ENCODE measurements at regions of chr5 and their contacts with region 1.

Region 1: DNA sequence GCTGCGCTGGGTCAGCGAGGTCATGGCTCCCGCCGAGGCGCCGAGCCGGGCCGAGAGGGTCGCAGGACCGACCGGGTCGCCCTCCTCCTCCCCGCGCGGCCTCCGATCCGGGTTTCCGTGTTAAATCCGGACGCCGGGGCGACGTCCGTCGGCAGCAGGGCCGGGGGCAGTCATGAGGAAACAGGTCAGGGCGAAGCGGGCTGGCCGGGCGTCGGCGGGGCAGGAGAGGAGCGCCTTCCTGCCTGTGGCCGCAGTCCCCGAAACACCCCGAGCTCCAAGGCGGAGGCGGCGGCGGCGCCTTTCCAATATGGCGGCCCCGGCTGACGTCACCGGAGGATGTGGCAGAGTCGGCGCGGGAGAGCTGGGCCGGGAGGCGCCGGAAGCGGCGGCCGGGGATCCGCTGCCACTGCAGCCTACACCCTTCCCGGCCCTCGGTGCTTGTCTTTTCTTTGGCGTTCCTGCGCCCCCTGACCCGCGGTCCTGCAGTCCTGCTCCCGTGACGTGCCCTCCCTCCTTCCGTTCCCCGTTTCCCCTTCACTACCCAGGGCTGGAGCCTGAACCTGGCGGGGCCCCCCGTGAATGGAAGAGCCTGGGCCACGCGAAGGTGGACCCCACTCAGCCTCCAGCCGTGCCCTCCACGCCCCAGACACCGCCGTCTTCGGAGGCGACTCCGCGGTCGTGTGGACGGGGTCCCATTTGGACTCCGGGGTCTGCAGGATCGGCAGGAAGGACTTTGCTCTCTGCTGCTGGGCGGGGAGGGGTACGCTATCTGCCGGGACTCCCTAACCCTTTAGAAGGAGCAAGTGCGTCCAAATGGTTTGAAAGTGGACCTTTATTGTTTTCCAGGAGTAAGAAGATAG is at the start of gene GOLPH3:
- DNase-seq: peak; percentile 83
- ATAC-seq: peak; percentile 86
- H3K4me3 ChIP-seq: peak within 1 kb of the TSS; percentile 86
- H3K27ac ChIP-seq: peak within 1 kb of the TSS; percentile 99
- H3K4me1 ChIP-seq: peaks cover 4% of the 10 kb centered on the region; the same call in 1 of the 2 replicates
- H3K27me3 ChIP-seq: no peaks in the 10 kb centered on the region
- CTCF ChIP-seq: no peak; the same call in 1 of the 2 replicates
- POLR2A ChIP-seq: peak; percentile 88
- RAD21 ChIP-seq: no peak
- total RNA-seq, gene GOLPH3: 38.2 and 59.7 TPM in 2 replicates

Region 2: GRCh38 chr5:32190095-32190494 is 15.9 kb after region 1 on chr5:
- CTCF ChIA-PET with region 1: no interaction called
- POLR2A ChIA-PET with region 1: interaction called, 10 read pairs
- dilution Hi-C with region 1: no loop called
- in situ Hi-C with region 1: no loop called
- intact Hi-C with region 1: no loop called
- DNase-seq: peak; percentile 50
- ATAC-seq: peak; percentile 44; the same call in 1 of the 2 replicates
- H3K4me3 ChIP-seq: no peak overlapping the region
- H3K27ac ChIP-seq: no peak overlapping the region
- H3K4me1 ChIP-seq: 0 out of 2 replicates have a peak, but pooled peaks cover 3% of the 10 kb centered on the region
- H3K27me3 ChIP-seq: no peaks in the 10 kb centered on the region
- CTCF ChIP-seq: no peak
- POLR2A ChIP-seq: no peak
- RAD21 ChIP-seq: no peak

Region 3: GRCh38 chr5:32223946-32224608 is 49.8 kb after region 1 on chr5:
- CTCF ChIA-PET with region 1: interaction called, 3 read pairs
- POLR2A ChIA-PET with region 1: interaction called, 6 read pairs
- dilution Hi-C with region 1: no loop called
- in situ Hi-C with region 1: loop called (anchors 5 kb)
- intact Hi-C with region 1: loop called (anchors 2 kb)
- DNase-seq: peak; percentile 75
- ATAC-seq: peak; percentile 96
- H3K4me3 ChIP-seq: no peak overlapping the region
- H3K27ac ChIP-seq: peak overlapping the region; percentile 63; the same call in 1 of the 2 replicates
- H3K4me1 ChIP-seq: peaks cover 12% of the 10 kb centered on the region
- H3K27me3 ChIP-seq: no peaks in the 10 kb centered on the region
- CTCF ChIP-seq: no peak
- POLR2A ChIP-seq: no peak
- RAD21 ChIP-seq: no peak

Region 4: GRCh38 chr5:32312647-32313523 is 138.6 kb after region 1 on chr5 and contains the start of gene MTMR12:
- CTCF ChIA-PET with region 1: no interaction called
- POLR2A ChIA-PET with region 1: interaction called, 4 read pairs
- dilution Hi-C with region 1: no loop called
- in situ Hi-C with region 1: no loop called
- intact Hi-C with region 1: loop called (anchors 2 kb)
- DNase-seq: peak; percentile 99
- ATAC-seq: peak; percentile 95
- H3K4me3 ChIP-seq: peak within 1 kb of the TSS; percentile 66
- H3K27ac ChIP-seq: peak within 1 kb of the TSS; percentile 72
- H3K4me1 ChIP-seq: peaks cover 5% of the 10 kb centered on the region
- H3K27me3 ChIP-seq: no peaks in the 10 kb centered on the region
- CTCF ChIP-seq: no peak
- POLR2A ChIP-seq: peak; percentile 87
- RAD21 ChIP-seq: no peak
- total RNA-seq, gene MTMR12: 20.3 and 21.3 TPM in 2 replicates

Region 5: DNA sequence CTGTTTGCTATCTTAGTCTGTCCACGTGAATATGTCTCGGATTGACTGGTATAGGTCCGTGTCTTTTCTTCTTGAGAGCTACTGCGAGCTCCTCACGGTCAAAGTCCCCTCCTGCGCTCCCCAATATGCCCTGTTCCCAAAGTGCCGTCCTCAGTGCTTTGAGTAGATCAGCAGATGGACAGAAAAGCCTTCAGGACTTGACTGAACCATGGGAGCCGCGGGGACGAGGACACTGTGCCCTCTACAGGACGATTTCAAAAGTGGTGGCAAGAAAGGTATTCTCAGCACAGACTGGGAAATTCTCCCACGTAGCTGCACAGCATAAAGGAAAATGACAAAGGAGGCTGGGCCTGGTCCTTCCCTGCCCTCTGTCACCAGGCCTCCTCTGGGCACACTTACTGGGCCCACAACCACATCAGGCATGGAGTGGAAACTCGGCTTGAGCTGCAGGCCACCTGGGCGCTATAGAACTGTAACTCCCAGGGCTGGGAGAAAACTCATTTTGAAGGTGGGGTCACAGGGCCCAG is 155.1 kb after region 1 on chr5:
- CTCF ChIA-PET with region 1: no interaction called
- POLR2A ChIA-PET with region 1: no interaction called
- dilution Hi-C with region 1: no loop called
- in situ Hi-C with region 1: no loop called
- intact Hi-C with region 1: loop called (anchors 5 kb)
- DNase-seq: peak; percentile 60
- ATAC-seq: peak; percentile 95
- H3K4me3 ChIP-seq: no peak overlapping the region
- H3K27ac ChIP-seq: no peak overlapping the region
- H3K4me1 ChIP-seq: peaks cover 5% of the 10 kb centered on the region; the same call in 1 of the 2 replicates
- H3K27me3 ChIP-seq: no peaks in the 10 kb centered on the region
- CTCF ChIP-seq: peak; percentile 71
- POLR2A ChIP-seq: no peak
- RAD21 ChIP-seq: peak; percentile 82